GM10248 (cell line): ENCODE measurements at regions of chr6 and their contacts with region 1.

Region 1: DNA sequence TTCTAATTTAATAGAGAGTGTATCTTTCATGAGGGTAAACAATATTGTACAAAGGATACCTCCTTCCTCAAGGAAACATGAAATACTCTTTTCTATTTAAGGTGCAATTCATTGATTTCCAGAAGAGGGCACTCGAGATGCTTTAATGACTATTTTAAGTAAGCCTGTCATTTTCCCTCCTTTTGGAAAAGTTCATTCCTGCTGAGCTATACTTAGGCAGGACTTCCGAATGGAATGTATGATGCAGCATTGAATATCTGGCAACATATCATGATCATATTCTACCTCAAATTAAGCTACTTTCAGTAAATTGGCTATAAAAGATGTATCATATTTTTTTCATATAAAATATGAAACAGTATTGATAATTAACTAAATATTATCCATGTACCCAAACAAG is 5.0 kb downstream of the DST start:
- DNase-seq: peak; percentile 18
- CTCF ChIP-seq: peak; percentile 69

Region 2: GRCh38 chr6:56370561-56371211 is 267.0 kb before region 1 on chr6:
- CTCF ChIA-PET with region 1: no interaction called
- POLR2A ChIA-PET with region 1: no interaction called
- DNase-seq: peak; percentile 18
- CTCF ChIP-seq: no peak

Region 3: DNA sequence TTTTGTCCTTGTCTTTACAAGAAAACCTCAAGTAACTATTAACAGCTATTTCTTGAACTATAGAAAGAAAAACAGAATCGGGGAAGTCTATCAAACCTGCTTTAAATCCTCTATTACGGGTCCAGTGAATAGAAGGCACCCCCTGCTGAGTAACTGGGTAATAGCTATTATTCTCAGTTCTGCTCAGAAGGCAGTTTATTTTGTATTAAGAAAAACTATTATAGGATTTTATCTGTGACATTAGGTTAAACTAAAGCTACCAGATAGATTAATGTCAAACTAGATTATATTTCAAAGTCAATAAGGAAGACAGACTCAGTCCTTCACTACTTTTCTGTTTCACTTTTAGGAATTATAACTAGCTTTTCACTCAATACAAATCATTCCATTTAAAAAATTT is 88.6 kb before region 1 on chr6:
- CTCF ChIA-PET with region 1: no interaction called
- POLR2A ChIA-PET with region 1: no interaction called
- DNase-seq: no peak
- CTCF ChIP-seq: peak; percentile 28

Region 4: DNA sequence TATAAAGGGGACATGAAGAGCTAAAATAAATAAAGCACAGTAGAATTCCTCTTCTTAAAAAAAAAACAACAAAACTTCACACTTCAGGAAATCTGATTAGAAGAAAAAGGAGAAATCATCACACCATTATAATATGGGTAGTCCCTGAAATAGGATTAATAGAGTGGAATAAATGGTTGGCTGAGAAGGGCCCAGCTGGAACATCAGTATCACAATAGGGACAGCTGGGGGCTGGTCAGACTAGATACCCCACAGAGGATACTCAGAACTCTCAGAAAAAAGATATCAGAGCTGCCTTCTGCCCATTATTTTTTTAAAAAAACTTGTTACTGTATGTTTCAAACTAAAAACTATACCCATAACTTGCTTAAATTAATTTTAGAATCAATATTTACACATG is 70.1 kb before region 1 on chr6:
- CTCF ChIA-PET with region 1: no interaction called
- POLR2A ChIA-PET with region 1: no interaction called
- DNase-seq: no peak
- CTCF ChIP-seq: no peak

Region 5: GRCh38 chr6:56624046-56624727 is 13.5 kb before region 1 on chr6:
- CTCF ChIA-PET with region 1: interaction called, 18 read pairs
- POLR2A ChIA-PET with region 1: no interaction called
- DNase-seq: no peak
- CTCF ChIP-seq: no peak

Region 6: GRCh38 chr6:56652994-56653393 is 15.4 kb after region 1 on chr6:
- CTCF ChIA-PET with region 1: interaction called, 17 read pairs
- POLR2A ChIA-PET with region 1: no interaction called
- DNase-seq: no peak
- CTCF ChIP-seq: no peak

Region 7: GRCh38 chr6:56677559-56677958 is 39.9 kb after region 1 on chr6:
- CTCF ChIA-PET with region 1: interaction called, 13 read pairs
- POLR2A ChIA-PET with region 1: no interaction called
- DNase-seq: no peak
- CTCF ChIP-seq: no peak

Region 8: GRCh38 chr6:56699066-56699654 is 61.5 kb after region 1 on chr6:
- CTCF ChIA-PET with region 1: interaction called, 10 read pairs
- POLR2A ChIA-PET with region 1: no interaction called
- DNase-seq: peak; percentile 36
- CTCF ChIP-seq: peak; percentile 41

Region 9: DNA sequence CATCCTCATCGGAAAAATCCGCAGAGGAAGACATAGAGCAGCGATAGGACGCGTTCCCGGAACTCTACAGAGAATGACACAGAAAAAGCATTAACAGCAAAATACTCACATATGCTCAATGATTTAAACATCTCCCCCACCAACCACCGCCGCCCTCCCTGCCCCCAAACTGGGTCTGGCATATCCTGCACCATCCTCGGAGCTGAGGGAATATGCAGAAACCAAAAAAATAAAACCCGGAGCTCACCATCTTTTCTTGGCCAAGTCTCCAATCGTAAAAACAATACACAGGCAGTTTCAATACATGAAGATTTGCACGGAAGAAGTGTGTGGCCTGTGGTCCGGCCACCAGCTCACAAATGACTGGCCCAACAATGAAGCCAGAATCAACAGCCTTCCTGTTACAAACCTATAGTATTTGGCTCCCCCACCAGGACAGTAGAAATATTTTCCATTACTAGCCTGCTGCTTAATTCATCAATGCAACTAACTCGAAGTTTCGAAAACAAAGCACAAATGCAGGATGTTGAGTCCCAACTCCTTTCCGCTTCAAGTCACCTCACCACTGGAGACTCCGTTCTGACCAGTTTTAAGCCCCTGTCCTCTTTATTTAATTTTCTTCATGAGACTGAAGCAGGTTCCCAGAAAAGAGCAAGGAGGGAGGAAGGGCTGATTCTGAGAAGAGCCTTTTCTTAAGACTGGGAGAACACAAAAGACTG is 214.1 kb after region 1 on chr6:
- CTCF ChIA-PET with region 1: interaction called, 39 read pairs
- POLR2A ChIA-PET with region 1: interaction called, 3 read pairs
- DNase-seq: peak; percentile 73
- CTCF ChIP-seq: peak; percentile 67

Region 10: GRCh38 chr6:57252975-57253374 is 615.3 kb after region 1 on chr6:
- CTCF ChIA-PET with region 1: no interaction called
- POLR2A ChIA-PET with region 1: no interaction called
- DNase-seq: no peak
- CTCF ChIP-seq: no peak